ENCODE measurements at regions of chr11 and their contacts with region 1.

Region 1: GRCh38 chr11:46649180-46649738 is 31.9 kb downstream of the ATG13 start:
- DNase-seq: peak in 1 of 2 donors; percentile 92
- H3K4me3 ChIP-seq: no peak overlapping the region
- H3K27ac ChIP-seq: peak overlapping the region; percentile 82
- H3K4me1 ChIP-seq: peaks cover 28% of the 10 kb centered on the region
- H3K27me3 ChIP-seq: no peaks in the 10 kb centered on the region
- CTCF ChIP-seq: no peak
- POLR2A ChIP-seq: no peak

Region 2: GRCh38 chr11:46112961-46113617 is 536.2 kb before region 1 on chr11:
- intact Hi-C with region 1: no loop called
- DNase-seq: no peak
- H3K4me3 ChIP-seq: no peak overlapping the region
- H3K27ac ChIP-seq: no peak overlapping the region
- H3K4me1 ChIP-seq: peaks cover 47% of the 10 kb centered on the region
- H3K27me3 ChIP-seq: no peaks in the 10 kb centered on the region
- CTCF ChIP-seq: no peak
- POLR2A ChIP-seq: no peak

Region 3: DNA sequence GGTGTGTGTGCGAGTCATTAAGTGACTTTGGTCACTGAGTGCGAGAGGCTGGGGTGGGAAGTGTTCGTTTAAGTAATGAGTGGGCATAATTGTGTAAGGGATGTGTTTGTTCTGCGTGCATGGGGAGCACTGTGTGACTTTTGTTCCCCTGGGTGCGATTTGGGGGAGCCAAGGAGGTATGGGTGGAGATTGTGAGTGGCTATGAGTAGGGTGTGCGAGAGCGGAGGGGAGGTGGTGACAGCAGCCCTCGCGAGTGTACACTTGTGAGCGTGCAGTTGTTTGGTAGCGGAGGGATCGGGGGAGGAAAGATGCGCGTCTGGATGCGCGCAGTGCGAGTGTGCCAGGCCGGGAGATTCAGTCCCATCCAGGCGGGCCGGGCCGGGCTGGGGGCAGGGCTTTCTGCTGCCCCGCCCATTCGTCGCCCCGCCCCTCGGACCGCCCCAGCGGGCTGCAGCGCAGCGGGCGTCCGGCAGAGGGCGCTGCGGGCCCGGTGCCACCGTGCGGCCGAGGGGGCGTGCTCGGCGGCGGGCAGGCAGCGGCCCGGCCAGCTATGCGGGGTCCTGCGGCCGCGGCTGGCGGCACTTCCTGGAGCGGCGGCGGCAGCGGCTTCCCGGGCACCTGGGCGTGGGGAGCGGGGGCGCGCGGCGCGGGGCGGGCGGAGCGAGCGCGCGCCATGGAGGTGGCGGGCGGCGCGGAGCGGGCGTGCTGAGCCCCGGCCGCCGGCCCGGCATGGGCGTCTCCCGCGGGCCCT is 302.2 kb before region 1 on chr11 and contains the start of gene DGKZ:
- intact Hi-C with region 1: no loop called
- DNase-seq: no peak
- H3K4me3 ChIP-seq: peak within 1 kb of the TSS; percentile 75 to 92
- H3K27ac ChIP-seq: peak within 1 kb of the TSS; percentile 76
- H3K4me1 ChIP-seq: peaks cover 60% of the 10 kb centered on the region
- H3K27me3 ChIP-seq: no peaks in the 10 kb centered on the region
- CTCF ChIP-seq: peak; percentile 55 to 60 (median 57)
- POLR2A ChIP-seq: no peak
- total RNA-seq, gene DGKZ: 78.8 TPM

Region 4: DNA sequence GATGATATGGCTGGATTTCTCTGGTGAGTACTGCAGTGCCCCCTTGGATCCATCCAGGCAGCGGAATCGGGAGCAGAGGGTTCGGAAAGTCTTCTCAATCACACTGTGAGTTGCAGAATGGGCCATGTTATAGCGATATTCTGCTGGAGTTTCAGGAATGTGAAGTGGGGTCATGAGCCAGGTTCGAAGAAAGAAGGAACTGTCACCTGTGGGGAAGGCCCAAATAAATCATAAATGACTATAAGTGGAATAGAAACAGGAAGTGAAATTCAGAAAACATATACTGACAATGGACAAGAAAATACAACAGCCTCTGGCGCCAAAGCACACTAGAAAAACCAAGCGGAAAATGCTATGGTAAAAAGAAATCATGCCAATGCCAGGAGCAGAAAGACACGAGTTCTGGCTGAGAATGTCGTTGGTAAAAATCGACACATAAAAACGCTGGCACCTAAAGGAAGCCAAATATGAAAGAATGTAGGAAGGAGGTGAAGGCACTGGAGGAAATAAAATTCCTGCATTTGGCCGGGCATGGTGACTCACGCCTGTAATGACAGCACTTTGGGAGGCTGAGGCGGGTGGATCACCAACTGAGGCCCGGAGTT is 45.5 kb before region 1 on chr11:
- intact Hi-C with region 1: no loop called
- DNase-seq: peak in 1 of 2 donors; percentile 25
- H3K4me3 ChIP-seq: no peak overlapping the region
- H3K27ac ChIP-seq: no peak overlapping the region
- H3K4me1 ChIP-seq: no peaks in the 10 kb centered on the region
- H3K27me3 ChIP-seq: no peaks in the 10 kb centered on the region
- CTCF ChIP-seq: no peak
- POLR2A ChIP-seq: no peak

Region 5: GRCh38 chr11:46669711-46670139 is 20.5 kb after region 1 on chr11:
- intact Hi-C with region 1: loop called (anchors 1 kb)
- DNase-seq: no peak
- H3K4me3 ChIP-seq: no peak overlapping the region
- H3K27ac ChIP-seq: no peak overlapping the region
- H3K4me1 ChIP-seq: peaks cover 34% of the 10 kb centered on the region
- H3K27me3 ChIP-seq: no peaks in the 10 kb centered on the region
- CTCF ChIP-seq: peak in 1 of 3 experiments; percentile 10
- POLR2A ChIP-seq: no peak

Region 6: GRCh38 chr11:46682773-46683752 is 33.8 kb after region 1 on chr11:
- intact Hi-C with region 1: no loop called
- DNase-seq: no peak
- H3K4me3 ChIP-seq: no peak overlapping the region
- H3K27ac ChIP-seq: peak overlapping the region; percentile 85
- H3K4me1 ChIP-seq: peaks cover 32% of the 10 kb centered on the region
- H3K27me3 ChIP-seq: no peaks in the 10 kb centered on the region
- CTCF ChIP-seq: no peak
- POLR2A ChIP-seq: no peak

Measured in vagina (tissue), 2 donors.